ENCODE measurements at regions of chr7 and their contacts with region 1.

Region 1: DNA sequence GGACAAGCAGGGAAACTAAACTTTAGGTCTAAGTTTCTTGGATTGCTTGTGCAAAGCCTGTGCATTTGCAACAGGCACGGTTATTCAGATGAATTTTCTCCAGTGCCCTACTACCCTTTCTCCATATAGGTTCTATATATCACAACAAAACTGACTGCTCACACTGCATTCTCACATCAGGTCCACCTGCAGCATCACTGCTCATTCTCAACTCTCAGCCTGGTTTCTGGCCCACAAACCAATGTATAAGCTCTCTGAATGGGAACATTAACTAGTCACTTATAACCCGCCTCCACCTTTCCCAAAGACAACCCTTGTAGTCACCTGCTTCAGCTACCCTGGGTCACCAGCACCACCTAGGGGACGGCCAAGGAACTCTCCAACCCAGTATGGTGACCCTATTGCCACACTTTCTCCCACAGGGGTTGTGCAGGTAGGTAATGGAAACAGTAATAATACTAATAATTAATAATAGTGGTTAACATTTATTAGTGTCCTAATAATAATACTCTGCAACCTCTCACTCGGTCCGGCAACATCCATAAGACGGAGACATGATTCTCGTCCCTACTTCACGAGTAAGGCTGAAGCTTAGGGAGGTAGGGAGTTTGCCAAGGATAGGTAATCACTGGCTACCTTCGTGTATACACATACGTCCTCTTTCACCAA is 97.3 kb downstream of the CLEC2L start:
- DNase-seq: no peak
- H3K4me3 ChIP-seq: no peak overlapping the region
- CTCF ChIP-seq: peak; percentile 56

Region 2: DNA sequence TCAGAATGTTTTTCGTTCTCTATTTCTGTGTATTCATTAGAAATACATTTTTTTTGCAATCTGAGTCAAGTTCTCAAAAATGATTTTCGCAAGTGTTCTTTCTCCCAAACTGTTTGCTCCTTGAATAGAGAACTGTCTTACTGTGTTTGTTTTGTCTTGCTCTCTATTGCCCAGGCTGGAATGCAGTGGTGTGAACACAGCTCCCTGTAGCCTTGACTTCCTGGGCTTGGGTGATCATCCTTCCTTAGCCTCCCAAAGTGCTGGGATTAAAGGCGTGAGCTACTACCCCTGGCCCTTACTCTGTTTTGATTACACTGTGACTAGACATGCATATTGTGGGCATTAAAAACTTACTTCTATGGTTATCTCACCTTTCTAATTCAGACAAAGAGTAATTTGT is 204.4 kb before region 1 on chr7:
- CTCF ChIA-PET with region 1: no interaction called
- POLR2A ChIA-PET with region 1: no interaction called
- DNase-seq: no peak
- H3K4me3 ChIP-seq: no peak overlapping the region
- CTCF ChIP-seq: no peak

Region 3: DNA sequence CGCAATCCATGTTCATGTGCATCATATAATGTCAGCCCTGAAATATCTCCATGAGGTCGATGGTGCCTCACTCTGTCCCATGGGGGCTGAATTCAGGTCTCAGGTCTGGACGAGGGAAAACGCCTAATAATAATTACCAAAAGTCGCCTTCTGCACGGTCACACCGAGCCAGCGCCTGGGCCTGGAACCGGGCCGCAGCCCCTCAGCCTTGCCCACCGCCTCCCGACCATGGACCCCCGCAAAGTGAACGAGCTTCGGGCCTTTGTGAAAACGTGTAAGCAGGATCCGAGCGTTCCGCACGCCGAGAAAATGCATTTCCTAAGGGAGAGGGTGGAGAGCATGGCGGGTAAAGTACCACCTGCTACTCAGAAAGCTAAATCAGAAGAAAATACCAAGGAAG is 118.6 kb before region 1 on chr7:
- CTCF ChIA-PET with region 1: interaction called, 11 read pairs
- POLR2A ChIA-PET with region 1: no interaction called
- DNase-seq: no peak
- H3K4me3 ChIP-seq: no peak overlapping the region
- CTCF ChIP-seq: no peak

Region 4: GRCh38 chr7:139635526-139636302 is 14.9 kb after region 1 on chr7:
- CTCF ChIA-PET with region 1: interaction called, 89 read pairs
- POLR2A ChIA-PET with region 1: interaction called, 3 read pairs
- DNase-seq: no peak
- H3K4me3 ChIP-seq: no peak overlapping the region
- CTCF ChIP-seq: no peak

Region 5: GRCh38 chr7:139777948-139778841 is 157.4 kb after region 1 on chr7 and contains the start of gene HIPK2:
- CTCF ChIA-PET with region 1: interaction called, 26 read pairs
- POLR2A ChIA-PET with region 1: no interaction called
- DNase-seq: no peak
- H3K4me3 ChIP-seq: peak within 1 kb of the TSS; percentile 76
- CTCF ChIP-seq: no peak

Region 6: GRCh38 chr7:139987691-139988516 is 367.1 kb after region 1 on chr7:
- CTCF ChIA-PET with region 1: interaction called, 20 read pairs
- POLR2A ChIA-PET with region 1: no interaction called
- DNase-seq: no peak
- H3K4me3 ChIP-seq: no peak overlapping the region
- CTCF ChIP-seq: no peak